Calu3 (cell line): ENCODE measurements at regions of chr9 and their contacts with region 1.

Region 1: DNA sequence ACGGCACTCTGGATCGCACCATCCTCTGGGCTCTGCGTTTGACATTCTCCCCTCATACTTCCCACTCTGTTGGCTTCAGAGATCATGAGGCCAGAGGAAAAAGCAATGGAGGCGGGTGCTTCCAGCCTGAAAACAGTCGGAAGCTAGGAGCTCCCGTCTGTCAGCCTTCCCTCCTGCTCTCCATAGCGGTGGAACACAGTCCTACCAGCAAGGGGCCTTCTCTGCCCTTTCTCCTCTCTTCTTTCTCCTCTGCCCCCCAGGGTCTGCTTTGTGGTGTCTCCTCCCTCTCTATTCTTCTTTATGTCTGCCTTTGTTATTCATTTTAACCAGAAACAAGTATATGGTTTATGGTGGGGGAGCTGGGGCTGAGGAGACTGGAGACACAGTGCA is 152.5 kb upstream of the NFIB start:
- DNase-seq: no peak
- H3K4me3 Mint-ChIP-seq: no peak overlapping the region
- H3K27ac Mint-ChIP-seq: no peak overlapping the region
- H3K4me1 Mint-ChIP-seq: peaks cover 32% of the 10 kb centered on the region
- H3K27me3 Mint-ChIP-seq: peaks cover 35% of the 10 kb centered on the region
- CTCF ChIP-seq: no peak

Region 2: GRCh38 chr9:13952906-13953305 is 513.5 kb before region 1 on chr9:
- CTCF ChIA-PET with region 1: no interaction called
- intact Hi-C with region 1: no loop called
- DNase-seq: no peak
- H3K4me3 Mint-ChIP-seq: no peak overlapping the region
- H3K27ac Mint-ChIP-seq: no peak overlapping the region
- H3K4me1 Mint-ChIP-seq: no peaks in the 10 kb centered on the region
- H3K27me3 Mint-ChIP-seq: no peaks in the 10 kb centered on the region
- CTCF ChIP-seq: no peak

Region 3: DNA sequence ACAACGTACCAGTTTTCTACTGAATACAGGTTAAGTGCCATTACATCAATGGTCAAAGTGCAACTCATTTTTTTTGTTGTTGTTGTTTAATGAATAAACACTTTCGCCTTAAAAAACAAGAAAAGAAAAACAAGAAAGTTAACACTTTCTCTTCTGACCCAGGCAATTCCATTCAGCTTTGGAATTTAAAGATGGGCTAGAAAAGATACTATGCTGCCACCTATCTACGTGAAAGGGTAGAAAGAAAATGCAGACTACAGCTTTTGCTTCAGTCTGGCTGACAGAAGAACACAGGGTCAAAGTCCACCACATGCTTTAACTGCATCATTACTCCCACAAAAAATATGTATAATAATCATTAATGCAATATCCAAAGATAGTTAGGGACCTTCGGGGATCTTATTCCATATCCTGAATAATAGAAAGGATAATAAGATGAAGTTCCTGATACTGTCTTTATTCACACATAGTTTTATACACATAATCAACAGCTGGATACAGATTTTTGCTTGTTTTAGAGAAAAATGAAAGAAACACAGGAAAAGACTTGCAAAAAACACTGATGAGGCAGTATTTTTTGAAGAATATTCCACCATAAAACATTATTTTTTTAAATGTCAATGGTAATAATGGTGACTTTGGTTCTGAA is 186.4 kb after region 1 on chr9:
- CTCF ChIA-PET with region 1: interaction called, 5 read pairs
- intact Hi-C with region 1: loop called (anchors 2 kb)
- DNase-seq: no peak
- H3K4me3 Mint-ChIP-seq: no peak overlapping the region
- H3K27ac Mint-ChIP-seq: no peak overlapping the region
- H3K4me1 Mint-ChIP-seq: no peaks in the 10 kb centered on the region
- H3K27me3 Mint-ChIP-seq: no peaks in the 10 kb centered on the region
- CTCF ChIP-seq: peak; percentile 20

Region 4: GRCh38 chr9:14768405-14769229 is 302.2 kb after region 1 on chr9:
- CTCF ChIA-PET with region 1: interaction called, 8 read pairs
- intact Hi-C with region 1: loop called (anchors 1 kb)
- DNase-seq: peak; percentile 34
- H3K4me3 Mint-ChIP-seq: no peak overlapping the region
- H3K27ac Mint-ChIP-seq: no peak overlapping the region
- H3K4me1 Mint-ChIP-seq: no peaks in the 10 kb centered on the region
- H3K27me3 Mint-ChIP-seq: peaks cover 10% of the 10 kb centered on the region
- CTCF ChIP-seq: peak; percentile 56